ENCODE measurements at regions of chr7 and their contacts with region 1.

Region 1: GRCh38 chr7:1664711-1665548 is 5.1 kb upstream of the ELFN1 start:
- DNase-seq: no peak
- H3K4me3 ChIP-seq: peak overlapping the region; percentile 24 to 72 (median 50)
- H3K27ac ChIP-seq: peak overlapping the region in 3 of 4 donors; percentile 11 to 66 (median 63)
- H3K4me1 ChIP-seq: peaks cover 34 to 61% (median 51%) of the 10 kb centered on the region in 3 donors
- H3K27me3 ChIP-seq: peaks cover 17 to 95% (median 31%) of the 10 kb centered on the region in 4 donors
- CTCF ChIP-seq: peak; percentile 28 to 73 (median 52)
- POLR2A ChIP-seq: no peak

Region 2: GRCh38 chr7:1357601-1358271 is 307.2 kb before region 1 on chr7:
- intact Hi-C with region 1: no loop called
- DNase-seq: no peak
- H3K4me3 ChIP-seq: no peak overlapping the region
- H3K27ac ChIP-seq: no peak overlapping the region
- H3K4me1 ChIP-seq: no peaks in the 10 kb centered on the region
- H3K27me3 ChIP-seq: peaks cover 0 to 52% (median 2%) of the 10 kb centered on the region in 4 donors
- CTCF ChIP-seq: no peak
- POLR2A ChIP-seq: no peak

Region 3: GRCh38 chr7:2148189-2148588 is 483.3 kb after region 1 on chr7:
- intact Hi-C with region 1: no loop called
- DNase-seq: no peak
- H3K4me3 ChIP-seq: no peak overlapping the region
- H3K27ac ChIP-seq: no peak overlapping the region
- H3K4me1 ChIP-seq: no peaks in the 10 kb centered on the region
- H3K27me3 ChIP-seq: no peaks in the 10 kb centered on the region
- CTCF ChIP-seq: no peak
- POLR2A ChIP-seq: no peak

Region 4: GRCh38 chr7:2214636-2215035 is 549.7 kb after region 1 on chr7:
- intact Hi-C with region 1: loop called (anchors 10 kb)
- DNase-seq: no peak
- H3K4me3 ChIP-seq: no peak overlapping the region
- H3K27ac ChIP-seq: no peak overlapping the region
- H3K4me1 ChIP-seq: no peaks in the 10 kb centered on the region
- H3K27me3 ChIP-seq: no peaks in the 10 kb centered on the region
- CTCF ChIP-seq: no peak
- POLR2A ChIP-seq: no peak